ENCODE measurements at regions of chr12 and their contacts with region 1.

Region 1: GRCh38 chr12:100672075-100672592 is 98.7 kb downstream of the GAS2L3 start:
- DNase-seq: peak; percentile 85
- ATAC-seq: peak; percentile 97
- H3K4me3 Mint-ChIP-seq: no peak overlapping the region
- H3K27ac Mint-ChIP-seq: no peak overlapping the region
- H3K4me1 Mint-ChIP-seq: no peaks in the 10 kb centered on the region
- H3K27me3 Mint-ChIP-seq: no peaks in the 10 kb centered on the region; the same call in 1 of the 2 replicates
- CTCF ChIP-seq: peak; percentile 79

Region 2: DNA sequence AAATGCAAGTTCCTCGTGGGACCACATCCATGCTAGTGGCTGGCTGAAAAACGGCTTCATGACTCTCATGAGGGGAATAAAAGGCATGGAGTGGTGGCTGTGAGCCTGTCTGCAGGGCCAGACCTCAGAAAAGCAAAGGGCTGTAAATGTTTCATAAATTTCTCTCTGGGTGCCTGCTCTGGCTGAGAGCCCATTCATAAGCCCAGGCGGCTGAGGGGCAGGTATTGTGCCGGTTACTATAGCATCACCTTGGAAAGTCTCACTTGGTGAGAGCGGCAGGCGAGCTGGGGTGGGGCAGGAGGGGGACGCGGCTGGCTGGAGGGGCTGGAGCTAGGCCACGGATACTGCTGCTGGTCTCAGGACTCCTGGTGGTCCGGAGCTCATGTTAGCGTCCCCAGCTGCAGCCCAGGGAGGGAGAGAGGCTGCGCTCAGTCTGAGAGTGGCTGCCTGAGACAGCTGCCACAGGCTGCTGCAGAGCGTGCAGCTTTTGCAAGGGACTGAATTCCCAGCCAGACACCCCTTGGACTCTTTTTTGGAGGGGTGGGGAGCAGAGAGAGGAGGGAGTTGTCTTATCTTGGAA is 315.4 kb before region 1 on chr12 and contains the start of gene SLC17A8:
- CTCF ChIA-PET with region 1: interaction called, 10 read pairs
- POLR2A ChIA-PET with region 1: no interaction called
- DNase-seq: peak; percentile 64
- ATAC-seq: peak; percentile 98
- H3K4me3 Mint-ChIP-seq: peak within 1 kb of the TSS; percentile 43
- H3K27ac Mint-ChIP-seq: no peak within 1 kb of the TSS
- H3K4me1 Mint-ChIP-seq: peaks cover 24% of the 10 kb centered on the region
- H3K27me3 Mint-ChIP-seq: no peaks in the 10 kb centered on the region; the same call in 1 of the 2 replicates
- CTCF ChIP-seq: no peak
- total RNA-seq, gene SLC17A8: 0.05 to 0.26 TPM in 2 of 3 replicates, not detected in the other

Region 3: GRCh38 chr12:100651108-100651507 is 21.0 kb before region 1 on chr12:
- CTCF ChIA-PET with region 1: interaction called, 17 read pairs
- POLR2A ChIA-PET with region 1: no interaction called
- DNase-seq: no peak
- ATAC-seq: no peak
- H3K4me3 Mint-ChIP-seq: no peak overlapping the region
- H3K27ac Mint-ChIP-seq: no peak overlapping the region
- H3K4me1 Mint-ChIP-seq: peaks cover 10% of the 10 kb centered on the region
- H3K27me3 Mint-ChIP-seq: peaks cover 2% of the 10 kb centered on the region; the same call in 1 of the 2 replicates
- CTCF ChIP-seq: peak; percentile 47

Region 4: GRCh38 chr12:100688451-100688864 is 16.3 kb after region 1 on chr12:
- CTCF ChIA-PET with region 1: interaction called, 33 read pairs
- POLR2A ChIA-PET with region 1: no interaction called
- DNase-seq: no peak
- ATAC-seq: no peak
- H3K4me3 Mint-ChIP-seq: no peak overlapping the region
- H3K27ac Mint-ChIP-seq: no peak overlapping the region
- H3K4me1 Mint-ChIP-seq: no peaks in the 10 kb centered on the region
- H3K27me3 Mint-ChIP-seq: peaks cover 3% of the 10 kb centered on the region; the same call in 1 of the 2 replicates
- CTCF ChIP-seq: no peak

Region 5: DNA sequence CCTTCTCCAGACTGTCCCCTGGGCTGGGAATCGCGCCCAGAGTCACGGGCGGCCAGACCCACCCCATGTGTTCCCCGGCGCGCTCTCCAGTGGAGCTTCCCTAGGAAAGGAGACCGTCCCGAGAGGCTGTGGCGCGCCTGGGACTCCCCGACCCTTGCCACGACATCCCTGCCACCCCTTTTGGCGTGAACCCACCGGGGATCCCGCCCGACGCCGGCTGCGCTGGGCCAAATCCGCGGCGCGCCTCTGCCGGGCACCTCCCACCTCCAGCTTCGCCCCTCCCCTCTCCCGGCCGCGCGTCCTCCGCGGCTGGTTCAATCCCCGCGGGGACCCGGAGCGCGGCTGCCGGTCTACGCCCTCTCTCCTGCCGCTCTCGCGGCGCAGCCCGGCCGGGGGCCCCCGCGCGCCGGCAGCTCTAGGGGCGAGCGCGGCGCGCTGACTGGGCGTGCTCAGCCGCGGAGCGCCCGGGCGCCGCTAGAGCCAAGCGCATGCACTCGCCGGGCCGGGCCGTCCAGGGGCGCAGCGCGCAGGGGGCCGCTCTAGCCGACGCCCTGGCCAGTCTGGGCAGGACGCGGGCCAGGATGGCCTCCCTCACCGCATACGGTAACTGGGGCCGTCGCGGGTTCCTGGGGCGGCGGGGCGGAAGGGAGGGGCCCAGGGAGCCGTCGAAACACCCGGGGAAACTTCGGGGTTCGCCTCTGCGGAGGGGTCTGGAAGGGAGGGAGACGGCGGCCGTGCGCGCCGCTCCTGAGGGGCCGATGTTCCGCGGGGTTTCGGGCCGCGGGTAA is 45.0 kb after region 1 on chr12:
- CTCF ChIA-PET with region 1: interaction called, 23 read pairs
- POLR2A ChIA-PET with region 1: no interaction called
- DNase-seq: peak; percentile 62
- ATAC-seq: peak; percentile 63
- H3K4me3 Mint-ChIP-seq: peak overlapping the region; percentile 71
- H3K27ac Mint-ChIP-seq: no peak overlapping the region
- H3K4me1 Mint-ChIP-seq: peaks cover 22% of the 10 kb centered on the region
- H3K27me3 Mint-ChIP-seq: peaks cover 56% of the 10 kb centered on the region
- CTCF ChIP-seq: no peak

Measured in WTC11 (cell line).